Lower lobe of right lung (tissue), 2 donors: ENCODE measurements at regions of chr4 and their contacts with region 1.

Region 1: DNA sequence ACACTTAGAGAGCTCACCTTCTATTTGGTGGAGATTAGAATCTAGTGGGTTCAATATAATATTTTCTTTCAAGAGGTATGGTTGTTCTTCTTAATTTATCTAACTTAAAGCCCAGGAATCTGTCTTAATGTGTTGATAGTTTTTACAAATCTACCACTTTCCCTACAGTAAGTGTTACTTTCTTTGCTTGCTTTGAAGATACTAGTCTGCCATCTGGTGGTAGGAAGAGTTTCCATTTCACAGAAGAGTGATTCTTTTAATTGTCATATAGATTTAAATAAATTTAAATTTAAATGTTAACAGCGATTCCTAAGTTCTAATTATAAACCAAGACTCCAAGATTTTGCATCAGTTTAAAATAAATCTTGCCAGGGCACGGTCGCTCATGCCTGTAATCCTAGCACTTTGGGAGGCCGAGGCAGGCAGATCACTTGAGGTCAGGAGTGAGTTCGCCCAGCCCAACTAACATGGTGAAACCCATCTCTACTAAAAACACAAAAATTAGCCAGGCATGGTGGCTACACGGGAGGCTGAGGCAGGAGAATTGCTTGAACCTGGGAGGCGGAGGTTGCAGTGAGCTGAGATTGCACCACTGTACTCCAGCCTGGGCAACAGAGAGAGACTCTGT is 43.5 kb downstream of the NUDT9 start:
- DNase-seq: no peak
- ATAC-seq: peak in 1 of 2 donors; percentile 44
- H3K4me3 ChIP-seq: no peak overlapping the region
- H3K27ac ChIP-seq: no peak overlapping the region
- H3K4me1 ChIP-seq: no peaks in the 10 kb centered on the region
- H3K27me3 ChIP-seq: no peaks in the 10 kb centered on the region
- CTCF ChIP-seq: peak; percentile 70

Region 2: GRCh38 chr4:86895692-86896488 is 570.0 kb before region 1 on chr4:
- intact Hi-C with region 1: no loop called
- DNase-seq: no peak
- ATAC-seq: peak in 1 of 2 donors; percentile 28
- H3K4me3 ChIP-seq: no peak overlapping the region
- H3K27ac ChIP-seq: no peak overlapping the region
- H3K4me1 ChIP-seq: peaks cover 10% of the 10 kb centered on the region
- H3K27me3 ChIP-seq: no peaks in the 10 kb centered on the region
- CTCF ChIP-seq: peak; percentile 77

Region 3: DNA sequence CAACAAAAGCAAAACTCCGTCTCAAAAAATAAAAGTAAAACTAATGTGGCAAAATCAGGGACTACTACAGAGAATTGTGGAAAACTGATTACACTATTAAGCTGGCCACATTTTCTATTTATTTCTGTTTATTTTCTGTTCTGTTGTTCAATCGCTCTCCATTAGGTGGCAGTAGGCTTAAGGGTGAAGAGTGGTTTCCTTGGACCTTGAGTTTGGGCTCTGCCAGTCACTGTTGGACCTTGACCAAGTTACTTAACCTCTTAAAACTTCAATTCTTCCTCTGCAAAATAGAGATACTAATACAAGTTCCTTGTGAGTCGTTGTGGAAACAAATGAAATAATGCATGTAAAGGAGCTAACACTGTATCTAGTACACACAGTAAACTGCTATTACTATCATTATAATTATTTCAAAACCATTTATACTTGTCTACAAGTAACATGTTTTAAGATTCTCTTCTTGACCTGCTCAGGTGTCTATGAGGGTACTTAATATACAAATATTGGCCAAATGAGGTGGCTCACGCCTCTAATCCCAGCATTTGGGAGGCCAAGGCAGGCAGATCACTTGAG is 90.0 kb before region 1 on chr4:
- intact Hi-C with region 1: loop called (anchors 10 kb)
- DNase-seq: no peak
- ATAC-seq: peak; percentile 90 to 93
- H3K4me3 ChIP-seq: no peak overlapping the region
- H3K27ac ChIP-seq: no peak overlapping the region
- H3K4me1 ChIP-seq: peaks cover 13% of the 10 kb centered on the region
- H3K27me3 ChIP-seq: no peaks in the 10 kb centered on the region
- CTCF ChIP-seq: peak; percentile 72

Region 4: DNA sequence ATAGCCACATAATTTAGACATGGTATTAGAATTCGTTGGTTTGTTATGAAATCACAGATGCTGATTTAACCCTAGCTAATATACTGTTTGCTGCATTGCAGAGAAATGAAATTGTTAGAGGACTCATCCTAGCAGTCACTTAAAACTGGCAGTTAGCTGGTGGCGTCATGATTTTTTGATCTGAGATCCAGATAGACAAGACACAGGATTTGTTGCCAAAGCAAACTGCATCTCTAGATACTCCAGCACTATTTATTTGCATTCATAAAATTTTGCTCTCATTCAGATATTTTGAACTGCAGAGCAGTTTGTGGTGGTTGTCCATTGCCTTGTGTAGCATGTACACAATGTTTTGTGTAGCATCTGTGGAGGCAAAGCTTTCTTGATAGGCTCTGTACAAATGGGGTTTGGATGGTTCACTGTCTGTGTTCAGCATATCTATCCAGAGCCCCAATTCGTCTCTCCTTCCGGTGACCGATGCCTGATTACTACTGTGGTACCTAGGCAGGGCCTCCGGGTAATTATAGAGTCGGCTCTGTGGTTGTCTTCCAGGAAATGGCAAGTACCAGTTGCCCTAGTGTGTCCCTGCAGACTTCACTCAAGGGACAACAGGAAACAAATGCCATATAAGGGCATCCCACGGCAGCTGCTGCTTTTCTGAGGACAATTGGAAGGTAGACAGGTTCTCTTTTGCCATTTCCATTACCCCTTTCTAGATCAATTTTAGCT is 93.4 kb after region 1 on chr4:
- intact Hi-C with region 1: no loop called
- DNase-seq: no peak
- ATAC-seq: peak; percentile 49 to 62
- H3K4me3 ChIP-seq: no peak overlapping the region
- H3K27ac ChIP-seq: no peak overlapping the region
- H3K4me1 ChIP-seq: no peaks in the 10 kb centered on the region
- H3K27me3 ChIP-seq: no peaks in the 10 kb centered on the region
- CTCF ChIP-seq: no peak